ENCODE measurements at regions of chr10 and their contacts with region 1.

Region 1: DNA sequence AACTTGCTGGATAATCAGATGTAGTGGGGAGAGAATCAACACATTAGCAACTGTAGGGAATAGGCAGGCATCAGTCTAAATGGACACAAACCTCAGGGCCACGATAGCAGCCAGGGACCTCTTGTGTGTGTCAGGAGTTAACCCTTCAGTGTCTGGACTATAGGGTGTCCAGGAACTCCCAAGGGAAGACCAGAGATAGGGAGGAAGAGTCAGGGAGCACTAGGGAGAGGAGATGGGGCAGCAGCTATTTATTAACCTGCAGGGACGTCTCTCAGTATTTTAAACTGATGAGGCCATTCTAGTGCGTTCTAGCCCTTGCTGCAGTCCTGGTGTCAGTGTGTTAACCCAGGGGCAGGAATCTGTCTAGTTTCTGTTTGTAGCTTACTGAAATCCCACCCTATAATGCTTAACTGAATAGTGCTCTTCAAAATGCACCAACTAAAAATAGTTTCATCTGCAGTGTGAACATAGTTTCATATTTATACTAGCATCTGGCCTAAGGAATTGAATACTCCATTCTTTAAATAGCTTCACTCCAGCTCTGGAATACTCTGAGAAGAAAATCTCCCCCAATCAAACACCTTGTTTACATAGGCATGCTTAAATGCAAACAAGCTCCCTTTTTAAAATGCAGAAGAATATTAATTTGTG is 62.7 kb downstream of the ARID5B start:
- DNase-seq: peak; percentile 41
- ATAC-seq: peak; percentile 73
- H3K4me3 ChIP-seq: peak overlapping the region; percentile 6; the same call in 1 of the 2 replicates
- H3K27ac ChIP-seq: peak overlapping the region; percentile 77; the same call in 1 of the 2 replicates
- H3K4me1 ChIP-seq: peaks cover 16% of the 10 kb centered on the region
- H3K27me3 ChIP-seq: no peaks in the 10 kb centered on the region
- CTCF ChIP-seq: no peak
- POLR2A ChIP-seq: no peak
- RAD21 ChIP-seq: no peak

Region 2: GRCh38 chr10:61943674-61944410 is 20.3 kb before region 1 on chr10:
- CTCF ChIA-PET with region 1: interaction called, 3 read pairs
- POLR2A ChIA-PET with region 1: no interaction called
- dilution Hi-C with region 1: no loop called
- in situ Hi-C with region 1: no loop called
- intact Hi-C with region 1: loop called (anchors 2 kb)
- DNase-seq: peak; percentile 53
- ATAC-seq: no peak; the same call in 1 of the 2 replicates
- H3K4me3 ChIP-seq: no peak overlapping the region
- H3K27ac ChIP-seq: peak overlapping the region; percentile 83; the same call in 1 of the 2 replicates
- H3K4me1 ChIP-seq: peaks cover 15% of the 10 kb centered on the region
- H3K27me3 ChIP-seq: no peaks in the 10 kb centered on the region
- CTCF ChIP-seq: 0 out of 2 replicates have a peak, but pooled peaks have one; percentile 9
- POLR2A ChIP-seq: no peak
- RAD21 ChIP-seq: no peak

Measured in IMR-90 (cell line).